ENCODE measurements at regions of chr4 and their contacts with region 1.

Region 1: DNA sequence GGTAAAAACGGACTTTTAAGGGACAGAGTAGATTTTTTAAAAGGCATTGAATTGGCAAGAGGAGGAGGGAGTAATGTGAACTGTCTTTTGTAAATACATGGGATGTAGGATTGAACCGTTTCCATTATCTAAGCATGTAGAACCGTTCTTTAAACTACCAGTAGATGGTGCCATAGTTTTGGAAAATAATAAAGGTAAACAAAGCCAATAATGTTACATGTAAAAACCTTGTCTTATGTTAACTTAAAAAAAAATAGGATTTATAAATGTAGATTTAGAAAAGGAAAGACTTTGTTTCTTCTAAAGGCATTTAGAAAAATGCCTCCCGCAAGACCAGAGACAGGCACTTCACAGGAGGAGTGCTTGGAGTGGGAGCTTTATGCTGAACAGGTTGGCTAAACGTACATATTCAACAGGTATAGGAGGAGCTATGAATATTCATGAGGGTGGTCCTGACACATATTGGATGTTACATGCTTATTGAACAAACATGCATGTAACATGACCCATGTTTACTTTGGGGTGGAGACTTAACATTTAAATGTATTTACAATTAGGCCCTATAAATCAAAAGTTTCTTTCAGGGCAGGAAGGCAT is 45.5 kb upstream of the FAM241A start:
- DNase-seq: no peak
- ATAC-seq: peak; percentile 80
- H3K4me3 Mint-ChIP-seq: no peak overlapping the region
- H3K27ac Mint-ChIP-seq: no peak overlapping the region
- H3K4me1 Mint-ChIP-seq: peaks cover 7% of the 10 kb centered on the region
- H3K27me3 Mint-ChIP-seq: peaks cover 25% of the 10 kb centered on the region

Region 2: GRCh38 chr4:112214390-112215264 is 114.8 kb after region 1 on chr4:
- CTCF ChIA-PET with region 1: interaction called, 13 read pairs
- DNase-seq: no peak
- ATAC-seq: peak; percentile 78
- H3K4me3 Mint-ChIP-seq: no peak overlapping the region
- H3K27ac Mint-ChIP-seq: no peak overlapping the region
- H3K4me1 Mint-ChIP-seq: peaks cover 8% of the 10 kb centered on the region
- H3K27me3 Mint-ChIP-seq: peaks cover 2% of the 10 kb centered on the region

Region 3: DNA sequence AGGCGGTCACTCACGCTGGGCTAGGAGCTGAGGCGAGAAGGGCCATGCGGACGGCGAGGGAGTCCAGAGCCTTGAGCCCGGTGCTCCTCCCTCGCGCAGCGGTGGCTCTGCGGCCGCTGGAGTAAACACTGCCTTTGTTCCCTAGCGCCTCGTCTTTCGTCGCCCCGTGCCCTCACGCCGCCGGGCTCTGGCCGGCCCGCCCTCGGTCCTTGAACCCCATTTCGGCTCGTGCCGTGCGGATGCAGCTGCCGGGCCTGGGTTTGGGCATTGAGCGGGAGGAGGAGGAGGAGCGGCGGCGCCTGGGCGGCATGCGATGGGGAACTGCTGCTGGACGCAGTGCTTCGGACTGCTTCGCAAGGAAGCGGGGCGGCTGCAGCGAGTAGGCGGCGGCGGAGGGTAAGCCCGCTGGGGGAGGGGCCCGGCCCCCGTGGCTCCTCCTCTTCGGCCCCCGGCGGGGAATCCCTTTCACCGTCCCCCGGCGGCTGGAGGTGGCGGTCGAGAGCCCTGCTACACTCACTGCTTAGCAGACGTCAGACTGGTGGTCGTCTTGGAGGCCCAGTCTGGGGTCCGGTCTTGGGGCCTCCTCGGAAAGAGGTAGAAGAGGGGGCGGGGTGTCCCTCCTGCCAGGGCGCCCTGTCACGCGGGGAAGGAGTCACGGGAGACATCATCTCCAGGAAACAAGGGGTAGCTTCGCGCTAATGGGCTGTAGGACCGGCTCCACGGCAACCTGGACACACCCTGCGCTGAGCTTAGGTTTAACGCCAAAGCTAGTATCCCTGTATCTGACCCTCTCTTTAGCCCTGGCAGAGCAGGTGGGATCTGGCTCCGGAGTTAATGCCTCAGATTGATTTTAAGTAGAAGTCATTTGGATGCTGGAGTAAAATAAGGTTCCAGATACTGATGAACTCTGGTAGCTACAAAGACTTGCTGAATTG is 132.2 kb after region 1 on chr4 and contains the start of gene AP1AR:
- CTCF ChIA-PET with region 1: interaction called, 42 read pairs
- DNase-seq: peak; percentile 89
- ATAC-seq: peak; percentile 67
- H3K4me3 Mint-ChIP-seq: peak within 1 kb of the TSS; percentile 89
- H3K27ac Mint-ChIP-seq: peak within 1 kb of the TSS; percentile 99
- H3K4me1 Mint-ChIP-seq: peaks cover 30% of the 10 kb centered on the region
- H3K27me3 Mint-ChIP-seq: no peaks in the 10 kb centered on the region
- total RNA-seq, gene AP1AR: 13.6 to 17.8 TPM

Region 4: DNA sequence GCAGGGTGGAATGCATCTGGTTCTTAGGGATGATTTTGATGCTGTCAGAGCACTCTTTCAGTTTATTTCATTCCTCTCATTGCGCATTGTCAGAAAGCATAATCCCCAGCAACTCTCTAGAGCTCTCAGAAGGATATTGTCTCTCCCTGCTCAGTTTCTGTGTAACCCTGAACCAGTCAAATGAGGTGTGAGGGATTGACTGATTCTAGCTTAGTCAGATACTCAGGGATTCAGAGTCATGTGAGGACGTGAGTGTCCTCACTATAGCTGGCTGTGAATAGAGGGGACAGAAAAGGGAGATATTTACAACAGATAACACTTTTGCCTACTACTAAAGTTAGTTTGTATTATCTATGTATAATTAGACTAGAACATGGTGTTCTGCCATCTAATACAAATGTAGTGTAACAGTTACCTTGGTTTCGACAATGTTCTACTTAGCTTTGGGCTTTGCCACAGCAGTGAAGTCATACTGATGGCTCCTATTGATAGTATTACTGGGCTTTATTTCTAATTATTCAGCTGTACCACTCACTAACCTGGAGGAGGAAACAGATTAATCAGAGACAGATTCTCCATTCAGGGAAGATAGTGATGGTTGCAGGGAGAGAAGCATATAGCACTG is 151.3 kb after region 1 on chr4:
- CTCF ChIA-PET with region 1: interaction called, 11 read pairs
- DNase-seq: no peak
- ATAC-seq: no peak
- H3K4me3 Mint-ChIP-seq: no peak overlapping the region
- H3K27ac Mint-ChIP-seq: no peak overlapping the region
- H3K4me1 Mint-ChIP-seq: no peaks in the 10 kb centered on the region
- H3K27me3 Mint-ChIP-seq: no peaks in the 10 kb centered on the region

Region 5: GRCh38 chr4:112358952-112359749 is 259.4 kb after region 1 on chr4:
- CTCF ChIA-PET with region 1: no interaction called
- DNase-seq: no peak
- ATAC-seq: no peak
- H3K4me3 Mint-ChIP-seq: no peak overlapping the region
- H3K27ac Mint-ChIP-seq: no peak overlapping the region
- H3K4me1 Mint-ChIP-seq: no peaks in the 10 kb centered on the region
- H3K27me3 Mint-ChIP-seq: no peaks in the 10 kb centered on the region

Region 6: DNA sequence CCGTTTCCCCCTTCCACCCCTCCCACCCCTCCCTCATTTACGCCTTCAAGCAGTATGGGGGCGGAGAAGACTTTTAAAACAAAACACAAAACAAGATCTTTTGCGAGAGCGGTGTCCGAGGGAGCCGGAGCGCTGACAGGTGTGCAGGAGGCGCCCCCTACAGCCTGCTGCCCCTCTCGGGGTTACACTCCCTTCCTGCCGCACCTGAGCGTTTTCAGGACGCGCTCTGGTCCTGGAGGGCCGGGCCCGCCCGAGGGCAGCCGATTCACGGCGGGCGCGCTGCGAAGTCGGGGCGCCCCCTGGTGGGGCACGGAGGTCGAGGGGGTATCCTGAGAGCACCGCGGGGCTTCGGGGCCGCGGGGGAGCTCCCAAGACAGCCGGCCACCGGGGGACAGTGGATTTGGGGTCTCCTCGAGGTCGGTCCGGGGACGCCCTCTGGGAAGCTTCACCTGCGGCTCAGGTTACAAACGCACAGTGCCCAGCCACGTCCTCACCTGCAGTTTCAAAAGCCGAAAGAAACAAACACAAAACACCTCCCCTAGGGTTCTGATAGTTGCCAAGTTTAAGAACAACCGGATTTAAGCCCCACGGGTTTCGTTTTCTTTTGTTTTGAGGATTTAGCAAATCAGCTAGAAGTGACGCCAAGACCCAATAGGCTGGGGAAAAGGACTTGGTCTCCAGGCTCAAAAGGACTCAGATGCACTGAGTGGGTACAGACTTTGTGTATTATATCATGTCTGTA is 424.1 kb after region 1 on chr4:
- CTCF ChIA-PET with region 1: interaction called, 10 read pairs
- DNase-seq: peak; percentile 84
- ATAC-seq: peak; percentile 89
- H3K4me3 Mint-ChIP-seq: peak overlapping the region; percentile 69
- H3K27ac Mint-ChIP-seq: no peak overlapping the region
- H3K4me1 Mint-ChIP-seq: peaks cover 37% of the 10 kb centered on the region
- H3K27me3 Mint-ChIP-seq: peaks cover 75% of the 10 kb centered on the region

Measured in activated CD8-positive, alpha-beta memory T cell treated with anti-CD3 and anti-CD28 coated beads, Interleukin-2, amount 10 ng/mL, durations not matched to agents 7 days and 5 days (primary cell).